ENCODE measurements at regions of chr4 and their contacts with region 1.

Region 1: GRCh38 chr4:62408454-62408853 is 1208.3 kb downstream of the ADGRL3 start:
- DNase-seq: peak; percentile 35
- ATAC-seq: no peak
- H3K4me3 ChIP-seq: no peak overlapping the region
- H3K27ac ChIP-seq: no peak overlapping the region
- H3K4me1 ChIP-seq: no peaks in the 10 kb centered on the region
- H3K27me3 ChIP-seq: no peaks in the 10 kb centered on the region
- CTCF ChIP-seq: peak; percentile 65

Region 2: DNA sequence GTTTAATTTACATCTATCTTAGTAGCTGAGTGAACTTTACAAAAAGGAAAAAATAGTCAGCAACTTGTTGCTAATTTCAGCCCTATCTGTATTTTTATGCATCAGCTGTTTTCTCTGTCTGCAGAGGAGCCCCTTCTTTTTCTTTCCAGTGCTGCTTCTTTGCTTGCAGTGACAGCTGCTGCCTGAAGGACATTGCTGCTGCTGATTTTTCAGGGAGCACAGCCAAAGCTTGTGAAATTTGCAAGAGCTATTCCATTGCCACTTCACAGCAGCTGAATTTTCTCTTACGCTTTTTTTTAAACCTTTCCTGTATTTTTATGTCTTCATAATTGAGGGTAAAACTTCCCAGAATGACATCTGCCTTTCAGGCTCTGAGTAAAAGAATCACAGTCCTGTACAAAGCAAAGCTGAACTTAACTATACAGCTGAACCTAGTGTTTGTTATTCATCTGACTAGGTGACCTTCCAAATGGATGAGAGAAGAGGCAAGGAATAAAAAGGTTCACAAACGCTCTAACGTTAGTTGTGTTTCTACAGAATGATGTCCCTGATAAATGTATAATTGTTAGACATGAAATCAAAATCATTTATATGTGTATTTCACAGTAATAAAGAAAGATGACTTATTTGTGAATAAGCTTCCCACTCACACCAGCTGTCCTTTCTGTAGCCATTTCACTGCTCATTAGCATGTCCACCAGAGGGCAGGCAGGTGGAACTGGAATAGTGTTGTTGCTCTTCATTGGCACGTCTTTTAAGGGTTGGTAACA is 666.9 kb before region 1 on chr4:
- CTCF ChIA-PET with region 1: no interaction called
- POLR2A ChIA-PET with region 1: no interaction called
- intact Hi-C with region 1: loop called (anchors 1 kb)
- DNase-seq: peak; percentile 75
- ATAC-seq: peak; percentile 81
- H3K4me3 ChIP-seq: no peak overlapping the region
- H3K27ac ChIP-seq: no peak overlapping the region
- H3K4me1 ChIP-seq: no peaks in the 10 kb centered on the region
- H3K27me3 ChIP-seq: no peaks in the 10 kb centered on the region
- CTCF ChIP-seq: peak; percentile 93

Region 3: DNA sequence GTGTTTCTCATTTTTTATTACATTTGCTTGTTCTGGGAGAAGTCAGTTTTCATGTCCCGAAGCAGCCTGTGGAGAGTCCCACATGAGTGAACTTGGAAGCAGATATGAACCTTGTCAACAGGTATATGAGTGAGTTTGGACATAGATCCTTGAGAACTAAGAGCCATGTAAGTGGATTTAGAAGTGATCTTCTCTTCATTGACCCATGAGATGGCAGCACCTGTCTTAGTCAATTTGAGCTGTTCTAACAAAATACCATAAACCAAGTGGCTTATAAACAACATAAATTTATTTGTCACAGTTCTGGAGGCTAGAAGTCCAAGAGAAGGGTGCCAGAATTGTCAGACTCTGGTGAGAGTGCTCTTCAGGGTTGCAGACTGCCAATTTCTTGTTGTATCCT is 164.6 kb before region 1 on chr4:
- CTCF ChIA-PET with region 1: interaction called, 3 read pairs
- POLR2A ChIA-PET with region 1: no interaction called
- intact Hi-C with region 1: loop called (anchors 1 kb)
- DNase-seq: peak; percentile 28
- ATAC-seq: peak; percentile 78
- H3K4me3 ChIP-seq: no peak overlapping the region
- H3K27ac ChIP-seq: no peak overlapping the region
- H3K4me1 ChIP-seq: no peaks in the 10 kb centered on the region
- H3K27me3 ChIP-seq: no peaks in the 10 kb centered on the region
- CTCF ChIP-seq: peak; percentile 47

Measured in PC-3 (cell line).